ENCODE measurements at regions of chr20 and their contacts with region 1.

Region 1: DNA sequence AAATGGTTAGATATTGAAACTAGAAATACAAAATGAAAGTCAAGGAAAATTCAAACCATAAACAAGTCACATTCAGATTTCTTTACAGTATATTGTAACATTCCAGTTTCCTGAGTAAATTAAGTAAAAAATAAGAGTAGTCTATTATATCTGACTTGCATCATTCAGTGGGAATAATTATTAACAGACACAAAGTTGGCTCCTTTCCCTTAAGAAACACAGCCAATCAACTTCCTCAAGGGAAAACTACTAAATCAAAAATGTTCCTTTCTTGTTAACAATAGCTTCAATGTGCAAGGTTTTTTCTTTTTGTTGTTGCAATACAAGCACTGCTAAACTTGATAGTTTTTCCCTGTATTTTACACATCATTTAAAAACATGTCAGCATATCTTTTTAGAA is 33.2 kb downstream of the DNAAF9 start:
- DNase-seq: no peak
- ATAC-seq: peak in 1 of 8 donors; percentile 46
- H3K4me3 ChIP-seq: no peak overlapping the region
- H3K27ac ChIP-seq: peak overlapping the region in 2 of 10 donors; percentile 2 to 11
- H3K4me1 ChIP-seq: peaks cover 0 to 44% (median 29%) of the 10 kb centered on the region in 9 donors
- H3K27me3 ChIP-seq: no peaks in the 10 kb centered on the region
- CTCF ChIP-seq: no peak

Region 2: GRCh38 chr20:3304456-3304855 is 69.8 kb before region 1 on chr20:
- intact Hi-C with region 1: loop called in 1 of 10 experiments (anchors 2 kb)
- DNase-seq: no peak
- ATAC-seq: peak in 1 of 8 donors; percentile 34
- H3K4me3 ChIP-seq: no peak overlapping the region
- H3K27ac ChIP-seq: no peak overlapping the region
- H3K4me1 ChIP-seq: peaks cover 0 to 13% (median 0%) of the 10 kb centered on the region in 9 donors
- H3K27me3 ChIP-seq: no peaks in the 10 kb centered on the region
- CTCF ChIP-seq: no peak

Region 3: GRCh38 chr20:3407771-3408637 is 33.7 kb after region 1 on chr20:
- intact Hi-C with region 1: loop called in 2 of 10 experiments (anchors 5 kb)
- DNase-seq: peak; percentile 78 to 80
- ATAC-seq: peak; percentile 81 to 89 (median 86)
- H3K4me3 ChIP-seq: peak overlapping the region; percentile 54 to 94 (median 88)
- H3K27ac ChIP-seq: peak overlapping the region; percentile 89 to 98 (median 95)
- H3K4me1 ChIP-seq: peaks cover 0 to 40% (median 26%) of the 10 kb centered on the region in 9 donors
- H3K27me3 ChIP-seq: no peaks in the 10 kb centered on the region
- CTCF ChIP-seq: no peak

Region 4: GRCh38 chr20:3413393-3413889 is 39.1 kb after region 1 on chr20:
- intact Hi-C with region 1: loop called in 2 of 10 experiments (anchors 5 kb)
- DNase-seq: no peak
- ATAC-seq: no peak
- H3K4me3 ChIP-seq: no peak overlapping the region
- H3K27ac ChIP-seq: no peak overlapping the region
- H3K4me1 ChIP-seq: peaks cover 0 to 9% (median 4%) of the 10 kb centered on the region in 9 donors
- H3K27me3 ChIP-seq: no peaks in the 10 kb centered on the region
- CTCF ChIP-seq: no peak

Region 5: GRCh38 chr20:3686867-3687321 is 312.6 kb after region 1 on chr20:
- intact Hi-C with region 1: no loop called
- DNase-seq: peak; percentile 73 to 86
- ATAC-seq: peak; percentile 78 to 92 (median 90)
- H3K4me3 ChIP-seq: no peak overlapping the region
- H3K27ac ChIP-seq: peak overlapping the region in 9 of 10 donors; percentile 26 to 76 (median 55)
- H3K4me1 ChIP-seq: peaks cover 6 to 22% (median 16%) of the 10 kb centered on the region in 9 donors
- H3K27me3 ChIP-seq: peaks cover 0 to 22% (median 10%) of the 10 kb centered on the region in 7 donors
- CTCF ChIP-seq: peak in 1 of 9 donors; percentile 17

Region 6: GRCh38 chr20:5215672-5216304 is 1841.5 kb after region 1 on chr20:
- intact Hi-C with region 1: loop called in 1 of 10 experiments (anchors 5 kb)
- DNase-seq: no peak
- ATAC-seq: no peak
- H3K4me3 ChIP-seq: no peak overlapping the region
- H3K27ac ChIP-seq: peak overlapping the region in 2 of 10 donors; percentile 15 to 66
- H3K4me1 ChIP-seq: peaks cover 0 to 29% (median 13%) of the 10 kb centered on the region in 9 donors
- H3K27me3 ChIP-seq: no peaks in the 10 kb centered on the region
- CTCF ChIP-seq: no peak

Measured in heart right ventricle (tissue), 16 donors.